Colonic mucosa (tissue), 4 donors: ENCODE measurements at regions of chr5 and their contacts with region 1.

Region 1: GRCh38 chr5:140690941-140691924 is at the starts of genes HARS1 and HARS2:
- DNase-seq: peak; percentile 95
- H3K4me3 ChIP-seq: peak within 1 kb of the TSS; percentile 88
- H3K27ac ChIP-seq: peak within 1 kb of the TSS; percentile 93
- H3K4me1 ChIP-seq: no peaks in the 10 kb centered on the region
- H3K27me3 ChIP-seq: no peaks in the 10 kb centered on the region
- CTCF ChIP-seq: no peak
- total RNA-seq, gene HARS1: 41.0 to 66.1 TPM
- total RNA-seq, gene HARS2: 37.8 to 38.7 TPM

Region 2: GRCh38 chr5:140647042-140647341 is 44.2 kb before region 1 on chr5:
- intact Hi-C with region 1: loop called (anchors 10 kb)
- DNase-seq: no peak
- H3K4me3 ChIP-seq: peak overlapping the region; percentile 98
- H3K27ac ChIP-seq: peak overlapping the region; percentile 84
- H3K4me1 ChIP-seq: peaks cover 11% of the 10 kb centered on the region
- H3K27me3 ChIP-seq: no peaks in the 10 kb centered on the region
- CTCF ChIP-seq: no peak

Region 3: GRCh38 chr5:140664359-140665119 is 26.7 kb before region 1 on chr5 and contains the start of gene WDR55:
- intact Hi-C with region 1: loop called (anchors 2 kb)
- DNase-seq: peak; percentile 99
- H3K4me3 ChIP-seq: peak within 1 kb of the TSS; percentile 96
- H3K27ac ChIP-seq: peak within 1 kb of the TSS; percentile 97
- H3K4me1 ChIP-seq: peaks cover 8% of the 10 kb centered on the region
- H3K27me3 ChIP-seq: no peaks in the 10 kb centered on the region
- CTCF ChIP-seq: no peak
- total RNA-seq, gene WDR55: 28.7 to 47.8 TPM

Region 4: GRCh38 chr5:140855772-140856674 is 164.8 kb after region 1 on chr5 and contains the start of gene PCDHA10:
- intact Hi-C with region 1: no loop called
- DNase-seq: no peak
- H3K4me3 ChIP-seq: no peak within 1 kb of the TSS
- H3K27ac ChIP-seq: no peak within 1 kb of the TSS
- H3K4me1 ChIP-seq: no peaks in the 10 kb centered on the region
- H3K27me3 ChIP-seq: no peaks in the 10 kb centered on the region
- CTCF ChIP-seq: no peak
- total RNA-seq, gene PCDHA10: 0.07 to 0.37 TPM